GM13976 (cell line): ENCODE measurements at regions of chr12 and their contacts with region 1.

Region 1: GRCh38 chr12:130041983-130042812 is 120.1 kb upstream of the FZD10 start:
- DNase-seq: peak; percentile 48
- CTCF ChIP-seq: peak; percentile 27

Region 2: DNA sequence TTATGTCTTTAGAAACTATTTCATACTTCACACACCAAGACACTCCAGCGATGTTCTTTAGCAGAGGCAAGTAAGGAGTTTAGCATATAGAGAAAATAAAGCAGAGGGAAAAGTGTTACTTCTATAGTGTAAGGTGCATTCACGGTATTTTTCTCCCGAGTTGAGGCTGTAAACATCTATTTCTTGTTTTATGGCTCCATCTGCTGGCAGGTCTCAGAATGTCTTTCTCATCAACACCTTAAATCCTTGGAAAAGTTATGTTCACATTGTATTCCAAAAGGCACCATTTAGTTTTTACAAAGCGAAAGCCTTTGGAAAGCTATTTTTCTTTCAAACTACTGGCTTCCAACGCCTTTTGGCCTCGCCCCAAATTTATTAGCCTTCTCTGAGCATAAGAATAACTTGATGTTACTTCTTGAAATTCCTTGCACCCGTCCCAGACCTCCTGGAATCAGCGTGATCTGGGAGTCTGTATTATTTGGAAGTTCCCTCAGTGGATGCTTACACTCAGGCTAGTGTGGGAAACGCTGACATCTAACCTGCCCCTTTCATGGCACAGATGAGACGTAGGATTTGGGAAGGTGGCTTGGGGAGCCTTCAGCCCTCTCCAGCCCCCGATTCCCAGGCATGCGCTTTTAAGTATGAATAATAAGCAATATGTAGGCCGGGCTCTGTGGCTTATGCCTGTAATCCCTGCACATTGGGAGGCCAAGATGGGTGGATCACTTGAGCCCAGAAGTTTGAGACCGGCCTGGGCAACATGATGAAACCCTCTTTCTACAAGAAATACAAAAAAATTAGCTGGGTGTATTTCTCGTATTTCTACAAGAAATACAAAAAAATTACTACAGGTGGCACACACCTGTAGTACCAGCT is 293.6 kb after region 1 on chr12:
- in situ Hi-C with region 1: loop called (anchors 10 kb)
- DNase-seq: peak; percentile 65
- CTCF ChIP-seq: peak; percentile 65